ENCODE measurements at regions of chr20 and their contacts with region 1.

Region 1: GRCh38 chr20:25539742-25540672 is 45.3 kb downstream of the NINL start:
- DNase-seq: peak in 1 of 2 donors; percentile 27
- ATAC-seq: peak; percentile 50 to 83 (median 78)
- H3K4me3 ChIP-seq: peak overlapping the region; percentile 11 to 52 (median 42)
- H3K27ac ChIP-seq: peak overlapping the region in 9 of 10 donors; percentile 16 to 73 (median 56)
- H3K4me1 ChIP-seq: peaks cover 3 to 41% (median 14%) of the 10 kb centered on the region in 9 donors
- H3K27me3 ChIP-seq: no peaks in the 10 kb centered on the region
- CTCF ChIP-seq: peak in 8 of 9 donors; percentile 15 to 57 (median 38)

Region 2: DNA sequence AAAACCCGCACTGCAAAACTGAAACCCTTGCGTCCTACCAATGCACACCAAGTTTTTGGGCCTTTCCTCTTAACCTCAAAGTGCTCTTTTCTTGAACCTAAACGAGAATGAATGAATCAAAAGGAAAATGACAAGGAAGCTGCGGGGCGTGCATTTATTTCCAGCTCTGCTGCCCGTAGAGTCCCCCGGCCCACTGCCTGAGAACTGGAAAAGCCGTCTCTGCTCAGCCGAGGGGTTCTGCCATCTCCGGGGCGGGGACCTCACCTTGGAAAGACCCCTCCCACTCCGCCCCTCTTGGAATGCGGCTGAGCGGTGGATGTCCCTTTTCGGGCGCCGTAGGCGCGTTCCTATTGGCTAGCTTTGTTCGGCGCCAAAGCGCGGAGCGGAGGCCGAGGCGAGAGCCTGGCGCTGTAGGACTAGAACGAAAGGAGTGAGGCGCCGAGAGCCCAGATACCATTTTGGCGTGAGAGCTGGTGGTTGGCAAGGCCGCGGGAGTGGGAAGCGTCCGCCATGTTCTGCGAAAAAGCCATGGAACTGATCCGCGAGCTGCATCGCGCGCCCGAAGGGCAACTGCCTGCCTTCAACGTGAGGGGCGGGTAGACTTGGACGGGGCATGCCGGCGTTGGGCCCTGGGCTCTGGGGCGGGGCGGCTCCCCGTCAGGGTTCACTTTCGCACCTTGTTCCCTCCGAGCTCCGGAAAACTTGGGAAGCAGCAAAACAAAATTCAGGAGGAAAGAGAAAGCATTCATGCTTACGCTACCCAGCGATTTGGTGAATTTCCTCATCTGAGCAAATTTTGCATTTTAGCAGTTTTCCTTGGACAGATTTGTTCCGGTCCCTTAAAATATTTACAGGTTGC is 132.5 kb before region 1 on chr20 and contains the start of gene GINS1:
- intact Hi-C with region 1: loop called in 1 of 10 experiments (anchors 10 kb)
- DNase-seq: peak; percentile 83
- ATAC-seq: peak; percentile 93 to 97 (median 96)
- H3K4me3 ChIP-seq: peak within 1 kb of the TSS; percentile 30 to 84 (median 64)
- H3K27ac ChIP-seq: peak within 1 kb of the TSS in 4 of 10 donors; percentile 24 to 61 (median 38)
- H3K4me1 ChIP-seq: peaks cover 0 to 22% (median 9%) of the 10 kb centered on the region in 9 donors
- H3K27me3 ChIP-seq: no peaks in the 10 kb centered on the region
- CTCF ChIP-seq: no peak
- total RNA-seq, gene GINS1: 0.19 to 1.6 (median 0.64) TPM

Region 3: DNA sequence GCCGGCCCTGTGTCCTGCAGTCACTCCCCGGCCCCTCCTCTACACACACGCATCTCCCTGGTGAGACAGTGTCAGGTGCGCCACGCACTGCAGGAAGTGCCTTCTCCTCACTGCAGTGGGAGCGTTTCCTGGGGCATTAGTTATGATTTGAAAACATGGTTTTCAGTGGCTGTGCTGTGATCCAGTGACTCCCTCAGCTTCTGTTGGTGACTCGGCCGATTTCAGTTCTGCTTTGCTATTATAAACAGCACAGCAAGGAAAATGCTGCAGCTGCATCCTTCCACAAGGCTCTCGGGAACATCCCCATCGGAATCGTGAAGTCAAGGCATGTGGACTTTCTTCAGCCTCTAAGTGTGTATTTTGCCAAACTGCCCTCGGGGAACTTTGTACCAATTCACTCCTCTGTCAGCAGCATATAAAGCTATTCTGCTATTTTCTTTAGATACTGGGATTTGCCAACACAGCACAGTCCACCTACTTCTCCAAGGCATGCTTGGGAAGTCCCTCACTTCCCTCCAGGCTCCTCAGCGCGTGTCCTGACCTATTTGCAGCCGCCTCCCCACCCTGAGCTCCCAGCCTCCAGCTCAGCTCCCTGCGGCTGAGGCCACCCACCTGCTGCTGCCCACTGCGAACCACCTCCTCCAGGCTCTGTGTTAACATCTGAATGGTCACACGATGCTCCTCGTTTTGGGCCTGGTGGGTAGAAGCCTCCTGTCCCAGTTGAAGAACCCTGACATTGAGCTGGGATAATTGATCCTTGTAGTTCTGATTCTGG is 78.0 kb before region 1 on chr20:
- intact Hi-C with region 1: loop called in 1 of 10 experiments (anchors 10 kb)
- DNase-seq: peak in 1 of 2 donors; percentile 29
- ATAC-seq: peak in 7 of 8 donors; percentile 4 to 57 (median 13)
- H3K4me3 ChIP-seq: no peak overlapping the region
- H3K27ac ChIP-seq: peak overlapping the region in 1 of 10 donors; percentile 22
- H3K4me1 ChIP-seq: peaks cover 0 to 9% (median 3%) of the 10 kb centered on the region in 9 donors
- H3K27me3 ChIP-seq: no peaks in the 10 kb centered on the region
- CTCF ChIP-seq: no peak

Region 4: GRCh38 chr20:25584905-25585704 is 45.1 kb after region 1 on chr20 and contains the start of gene NINL:
- intact Hi-C with region 1: loop called in 1 of 10 experiments (anchors 10 kb)
- DNase-seq: peak; percentile 48 to 65
- ATAC-seq: peak; percentile 70 to 93 (median 83)
- H3K4me3 ChIP-seq: peak within 1 kb of the TSS; percentile 33 to 86 (median 64)
- H3K27ac ChIP-seq: peak within 1 kb of the TSS in 6 of 10 donors; percentile 30 to 67 (median 50)
- H3K4me1 ChIP-seq: peaks cover 0 to 14% (median 11%) of the 10 kb centered on the region in 9 donors
- H3K27me3 ChIP-seq: peaks cover 0 to 43% (median 29%) of the 10 kb centered on the region in 7 donors
- CTCF ChIP-seq: no peak
- total RNA-seq, gene NINL: 1.4 to 8.3 (median 3.8) TPM

Region 5: GRCh38 chr20:25623736-25624499 is 83.9 kb after region 1 on chr20 and contains the start of gene NANP:
- intact Hi-C with region 1: loop called in 2 of 10 experiments (anchors 5 to 10 kb)
- DNase-seq: peak; percentile 96 to 97
- ATAC-seq: peak; percentile 94 to 97 (median 96)
- H3K4me3 ChIP-seq: peak within 1 kb of the TSS; percentile 87 to 98 (median 92)
- H3K27ac ChIP-seq: peak within 1 kb of the TSS; percentile 62 to 97 (median 90)
- H3K4me1 ChIP-seq: peaks cover 0 to 26% (median 17%) of the 10 kb centered on the region in 9 donors
- H3K27me3 ChIP-seq: no peaks in the 10 kb centered on the region
- CTCF ChIP-seq: peak in 3 of 9 donors; percentile 6 to 24 (median 19)
- total RNA-seq, gene NANP: 1.9 to 6.2 (median 3.0) TPM